HEK293 (cell line): ENCODE measurements at regions of chr5 and their contacts with region 1.

Region 1: GRCh38 chr5:54844905-54845566 is 140.4 kb downstream of the ESM1 start:
- H3K4me3 ChIP-seq: no peak overlapping the region
- H3K27ac ChIP-seq: no peak overlapping the region
- H3K4me1 ChIP-seq: no peaks in the 10 kb centered on the region
- CTCF ChIP-seq: no peak

Region 2: GRCh38 chr5:54443270-54443669 is 401.8 kb before region 1 on chr5:
- CTCF ChIA-PET with region 1: interaction called, 11 read pairs
- POLR2A ChIA-PET with region 1: no interaction called
- H3K4me3 ChIP-seq: no peak overlapping the region
- H3K27ac ChIP-seq: no peak overlapping the region
- H3K4me1 ChIP-seq: no peaks in the 10 kb centered on the region
- CTCF ChIP-seq: 0 out of 2 replicates have a peak, but pooled peaks have one; percentile 20

Region 3: GRCh38 chr5:54517174-54518092 is 327.6 kb before region 1 on chr5 and contains the start of gene SNX18:
- CTCF ChIA-PET with region 1: interaction called, 56 read pairs
- POLR2A ChIA-PET with region 1: no interaction called
- H3K4me3 ChIP-seq: peak within 1 kb of the TSS; percentile 83
- H3K27ac ChIP-seq: peak within 1 kb of the TSS; percentile 86
- H3K4me1 ChIP-seq: peaks cover 7% of the 10 kb centered on the region; the same call in 1 of the 2 replicates
- CTCF ChIP-seq: peak; percentile 90

Region 4: DNA sequence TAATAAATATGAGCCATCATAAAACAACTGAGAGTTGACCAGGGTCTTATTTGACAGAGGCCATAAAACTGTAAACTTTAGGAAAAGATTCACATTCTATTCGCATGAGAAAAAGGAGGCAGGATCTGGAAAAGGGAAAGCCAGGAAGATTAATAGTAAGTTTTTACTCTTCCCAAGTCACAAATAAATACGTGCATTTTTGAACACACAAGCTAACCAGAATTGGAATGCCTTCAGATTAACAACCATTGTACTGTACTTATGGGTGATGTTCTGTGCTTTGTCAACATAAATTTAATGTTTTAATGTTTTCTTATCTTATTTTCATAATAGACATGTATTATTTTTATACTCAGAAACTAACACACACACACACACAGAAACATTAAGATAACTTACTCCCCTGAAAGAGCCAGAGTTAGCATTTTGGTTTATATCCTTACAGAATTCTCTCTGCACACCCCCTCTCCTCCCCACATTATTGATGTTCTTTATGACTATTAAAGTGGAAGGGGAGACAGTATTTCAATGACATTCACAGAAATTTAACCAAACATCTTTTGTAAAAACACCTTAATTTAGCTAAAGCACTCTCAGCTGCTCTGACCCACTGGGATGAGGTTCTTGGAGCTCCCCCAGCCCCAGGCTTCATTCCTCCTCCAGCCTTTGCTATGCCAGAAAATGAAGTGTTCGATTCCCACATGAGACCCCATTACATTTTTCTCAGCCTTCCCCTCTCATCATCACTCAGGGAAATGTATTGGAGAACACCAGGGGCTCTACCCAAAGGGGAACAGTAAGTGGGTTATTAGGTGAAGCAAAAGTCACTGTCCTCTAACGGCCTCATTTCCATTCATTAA is 15.1 kb before region 1 on chr5:
- CTCF ChIA-PET with region 1: interaction called, 12 read pairs
- POLR2A ChIA-PET with region 1: no interaction called
- H3K4me3 ChIP-seq: no peak overlapping the region
- H3K27ac ChIP-seq: no peak overlapping the region
- H3K4me1 ChIP-seq: no peaks in the 10 kb centered on the region
- CTCF ChIP-seq: no peak